Right lobe of liver (tissue), 6 donors: ENCODE measurements at regions of chr17 and their contacts with region 1.

Region 1: GRCh38 chr17:17641621-17642409 is 39.4 kb upstream of the RAI1 start:
- DNase-seq: peak; percentile 77 to 81 (median 79)
- ATAC-seq: peak; percentile 90 to 98 (median 96)
- H3K4me3 ChIP-seq: no peak overlapping the region
- H3K27ac ChIP-seq: no peak overlapping the region
- H3K4me1 ChIP-seq: no peaks in the 10 kb centered on the region
- H3K27me3 ChIP-seq: no peaks in the 10 kb centered on the region
- CTCF ChIP-seq: peak; percentile 84 to 97 (median 89)
- POLR2A ChIP-seq: no peak

Region 2: DNA sequence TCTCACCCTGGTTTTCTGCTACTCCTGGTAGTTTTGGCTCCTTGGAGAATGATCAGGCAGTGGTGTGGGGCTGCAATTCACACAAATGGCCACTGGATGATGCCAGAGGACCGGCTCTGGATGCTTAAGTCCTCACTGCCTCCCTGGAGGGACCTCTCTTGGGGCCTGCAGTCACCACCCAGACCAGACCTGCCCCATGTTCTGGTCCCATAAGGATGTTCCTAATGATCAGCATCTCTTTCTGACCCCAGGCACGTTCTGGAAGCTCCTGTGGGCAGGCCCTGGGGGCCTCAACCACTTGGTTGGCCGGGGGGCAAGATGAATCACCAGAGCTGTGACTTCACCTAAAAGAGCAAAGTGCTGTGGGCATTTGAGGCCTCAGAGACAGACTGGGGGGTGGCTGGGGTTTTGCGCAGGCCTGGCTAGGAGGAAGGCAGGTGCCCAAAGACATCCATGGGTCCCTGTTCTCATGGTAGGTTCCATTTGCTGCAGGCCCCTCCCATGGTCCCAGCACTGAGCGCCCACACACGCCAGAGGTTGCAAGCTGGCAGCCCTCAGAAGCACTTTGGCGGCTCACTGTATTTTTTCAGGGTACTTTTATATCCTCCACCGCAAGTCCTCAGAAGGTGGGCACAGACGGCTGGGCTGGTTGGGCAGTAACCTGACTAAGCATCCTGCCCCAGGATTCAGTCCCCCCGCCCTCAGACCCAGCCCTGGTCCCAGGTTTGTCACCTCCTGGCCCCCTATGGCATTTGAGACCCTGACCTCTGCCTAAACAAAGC is 285.5 kb before region 1 on chr17:
- intact Hi-C with region 1: loop called (anchors 5 kb)
- DNase-seq: peak; percentile 67 to 77 (median 76)
- ATAC-seq: peak; percentile 87 to 96 (median 94)
- H3K4me3 ChIP-seq: no peak overlapping the region
- H3K27ac ChIP-seq: no peak overlapping the region
- H3K4me1 ChIP-seq: peaks cover 0 to 3% (median 0%) of the 10 kb centered on the region in 4 donors
- H3K27me3 ChIP-seq: no peaks in the 10 kb centered on the region
- CTCF ChIP-seq: peak; percentile 97 to 100 (median 99)
- POLR2A ChIP-seq: no peak

Region 3: DNA sequence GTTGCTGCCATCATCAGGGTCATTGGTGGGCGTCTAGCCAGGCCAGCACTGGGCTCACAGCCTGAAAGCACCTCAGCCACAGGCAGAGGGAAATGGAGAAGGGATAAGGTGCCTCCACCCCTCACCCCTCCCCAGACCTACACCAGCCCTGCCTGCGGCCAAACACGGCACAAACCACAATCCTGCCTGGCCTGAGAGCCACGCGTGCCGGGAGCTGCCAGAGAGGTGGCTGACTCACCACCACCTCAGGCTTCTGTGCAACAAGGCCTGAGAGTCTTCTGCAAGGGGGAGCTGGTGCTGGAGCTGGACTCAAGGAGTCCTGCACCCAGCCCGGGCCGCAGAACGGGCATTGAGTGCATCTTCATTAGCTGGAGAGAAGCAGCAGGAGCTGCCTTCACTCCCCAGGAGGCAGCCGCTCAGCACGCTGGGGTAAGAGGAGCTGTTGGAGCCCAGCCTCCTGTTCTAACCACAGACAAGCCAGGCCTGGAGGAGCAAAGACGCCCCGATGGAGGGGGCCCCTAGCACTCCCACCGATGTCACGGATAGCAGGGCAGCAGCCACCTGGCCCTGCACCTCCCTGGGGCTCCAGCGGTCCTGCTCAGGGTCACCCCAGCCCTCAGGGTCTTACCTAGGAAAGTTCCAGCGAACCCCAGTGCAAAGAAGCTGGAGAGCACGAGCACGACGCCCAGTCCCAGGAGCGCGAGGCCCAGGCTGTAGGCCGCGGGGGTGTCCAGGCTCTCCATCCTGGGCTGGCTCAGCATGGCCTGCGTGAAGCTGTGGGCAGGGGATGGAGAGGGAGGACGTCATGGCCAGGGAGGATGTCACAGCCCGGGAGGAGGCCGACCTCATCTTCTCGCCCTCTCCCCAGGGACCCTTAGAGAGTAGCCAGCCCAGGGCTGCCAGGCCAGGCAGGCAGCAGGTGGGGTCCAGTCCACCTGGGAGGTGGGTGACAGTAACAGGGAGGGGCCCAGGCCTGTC is 129.6 kb before region 1 on chr17:
- intact Hi-C with region 1: loop called (anchors 10 kb)
- DNase-seq: peak in 2 of 3 donors; percentile 14 to 55
- ATAC-seq: no peak
- H3K4me3 ChIP-seq: no peak overlapping the region
- H3K27ac ChIP-seq: no peak overlapping the region
- H3K4me1 ChIP-seq: no peaks in the 10 kb centered on the region
- H3K27me3 ChIP-seq: no peaks in the 10 kb centered on the region
- CTCF ChIP-seq: no peak
- POLR2A ChIP-seq: no peak

Region 4: GRCh38 chr17:17994271-17995069 is 352.7 kb after region 1 on chr17:
- intact Hi-C with region 1: no loop called
- DNase-seq: no peak
- ATAC-seq: peak; percentile 60 to 68 (median 64)
- H3K4me3 ChIP-seq: no peak overlapping the region
- H3K27ac ChIP-seq: no peak overlapping the region
- H3K4me1 ChIP-seq: no peaks in the 10 kb centered on the region
- H3K27me3 ChIP-seq: no peaks in the 10 kb centered on the region
- CTCF ChIP-seq: peak in 3 of 4 donors; percentile 32 to 39 (median 32)
- POLR2A ChIP-seq: no peak